Heart right ventricle (tissue), 16 donors: ENCODE measurements at regions of chr18 and their contacts with region 1.

Region 1: GRCh38 chr18:50819728-50820378 is at the start of gene MRO:
- DNase-seq: peak; percentile 78 to 85
- ATAC-seq: peak; percentile 91 to 98 (median 96)
- H3K4me3 ChIP-seq: peak within 1 kb of the TSS in 9 of 10 donors; percentile 11 to 52 (median 40)
- H3K27ac ChIP-seq: peak within 1 kb of the TSS; percentile 1 to 74 (median 43)
- H3K4me1 ChIP-seq: peaks cover 0 to 24% (median 15%) of the 10 kb centered on the region in 9 donors
- H3K27me3 ChIP-seq: no peaks in the 10 kb centered on the region
- CTCF ChIP-seq: peak; percentile 77 to 97 (median 93)
- total RNA-seq, gene MRO: 1.0 to 4.3 (median 2.3) TPM

Region 2: GRCh38 chr18:50866765-50867164 is 46.9 kb after region 1 on chr18:
- intact Hi-C with region 1: loop called in 7 of 10 experiments (anchors 1 to 5 kb)
- DNase-seq: no peak
- ATAC-seq: peak in 6 of 8 donors; percentile 17 to 90 (median 58)
- H3K4me3 ChIP-seq: no peak overlapping the region
- H3K27ac ChIP-seq: no peak overlapping the region
- H3K4me1 ChIP-seq: peaks cover 0 to 18% (median 0%) of the 10 kb centered on the region in 9 donors
- H3K27me3 ChIP-seq: no peaks in the 10 kb centered on the region
- CTCF ChIP-seq: peak in 6 of 9 donors; percentile 27 to 44 (median 38)

Region 3: DNA sequence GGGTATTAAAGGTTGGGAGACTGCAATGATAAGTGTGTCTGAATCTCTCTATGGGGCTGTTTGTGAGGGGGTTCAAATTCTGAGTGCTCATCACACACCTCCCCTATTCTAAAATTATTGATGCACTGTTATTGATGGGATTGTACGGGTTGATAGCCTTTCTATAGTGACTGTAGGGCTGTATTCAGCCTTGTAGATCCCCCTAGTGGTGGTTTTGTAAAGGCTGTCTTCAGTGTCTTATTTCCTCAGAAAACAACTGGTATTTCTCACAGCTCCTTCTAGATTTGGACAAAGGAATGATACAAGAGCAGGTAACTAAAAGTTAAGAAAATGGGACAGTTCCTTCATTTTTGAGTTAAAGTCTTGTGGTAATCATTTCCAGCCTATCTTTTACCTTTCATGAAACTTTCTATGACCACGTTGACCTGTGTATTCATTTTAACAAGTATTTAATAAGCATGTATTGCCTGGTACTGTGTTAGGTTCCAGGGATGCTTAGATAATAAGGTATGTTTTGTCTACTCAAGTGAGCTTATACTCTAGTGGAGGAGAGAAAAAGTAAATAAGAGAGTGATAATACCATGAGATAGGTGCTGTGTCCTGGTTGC is 231.4 kb after region 1 on chr18:
- intact Hi-C with region 1: loop called in 9 of 10 experiments (anchors 1 to 10 kb)
- DNase-seq: no peak
- ATAC-seq: peak; percentile 67 to 84 (median 76)
- H3K4me3 ChIP-seq: no peak overlapping the region
- H3K27ac ChIP-seq: no peak overlapping the region
- H3K4me1 ChIP-seq: peaks cover 0 to 34% (median 11%) of the 10 kb centered on the region in 9 donors
- H3K27me3 ChIP-seq: no peaks in the 10 kb centered on the region
- CTCF ChIP-seq: peak; percentile 65 to 83 (median 75)